ENCODE measurements at regions of chr16 and their contacts with region 1.

Region 1: GRCh38 chr16:86519649-86520316 is 9.5 kb downstream of the FOXF1 start:
- DNase-seq: peak; percentile 65
- H3K4me3 ChIP-seq: no peak overlapping the region
- H3K27ac ChIP-seq: no peak overlapping the region
- H3K4me1 ChIP-seq: peaks cover 5% of the 10 kb centered on the region
- H3K27me3 ChIP-seq: peaks cover 24 to 28% of the 10 kb centered on the region in 2 experiments
- CTCF ChIP-seq: peak; percentile 86 to 89
- POLR2A ChIP-seq: no peak

Region 2: DNA sequence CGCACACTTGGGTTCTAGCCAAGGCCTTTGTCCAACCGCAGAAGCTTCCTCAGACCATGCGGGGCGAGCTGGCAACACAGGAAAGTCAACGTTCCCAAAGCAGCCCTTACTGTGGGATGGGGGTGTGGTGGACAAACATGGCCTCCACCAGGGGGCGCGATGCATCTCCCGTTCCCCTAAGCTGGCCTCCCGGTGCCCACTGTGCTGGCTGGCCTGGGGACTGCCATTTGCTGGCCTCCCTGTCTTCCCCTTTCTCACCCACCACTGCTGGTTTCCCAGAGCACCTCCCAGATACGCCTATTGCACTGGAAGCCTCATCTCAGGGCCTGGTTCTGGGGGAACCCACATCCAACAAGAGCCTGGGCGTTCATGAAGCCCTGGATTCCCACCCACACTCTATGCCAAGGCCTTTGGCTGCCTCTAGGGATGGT is 475.5 kb before region 1 on chr16:
- CTCF ChIA-PET with region 1: interaction called, 109 read pairs
- POLR2A ChIA-PET with region 1: no interaction called
- dilution Hi-C with region 1: no loop called
- intact Hi-C with region 1: loop called (anchors 1 kb)
- DNase-seq: peak; percentile 36
- H3K4me3 ChIP-seq: no peak overlapping the region
- H3K27ac ChIP-seq: no peak overlapping the region
- H3K4me1 ChIP-seq: no peaks in the 10 kb centered on the region
- H3K27me3 ChIP-seq: peaks cover 5 to 20% of the 10 kb centered on the region in 2 experiments
- CTCF ChIP-seq: peak; percentile 69 to 91
- POLR2A ChIP-seq: no peak

Region 3: DNA sequence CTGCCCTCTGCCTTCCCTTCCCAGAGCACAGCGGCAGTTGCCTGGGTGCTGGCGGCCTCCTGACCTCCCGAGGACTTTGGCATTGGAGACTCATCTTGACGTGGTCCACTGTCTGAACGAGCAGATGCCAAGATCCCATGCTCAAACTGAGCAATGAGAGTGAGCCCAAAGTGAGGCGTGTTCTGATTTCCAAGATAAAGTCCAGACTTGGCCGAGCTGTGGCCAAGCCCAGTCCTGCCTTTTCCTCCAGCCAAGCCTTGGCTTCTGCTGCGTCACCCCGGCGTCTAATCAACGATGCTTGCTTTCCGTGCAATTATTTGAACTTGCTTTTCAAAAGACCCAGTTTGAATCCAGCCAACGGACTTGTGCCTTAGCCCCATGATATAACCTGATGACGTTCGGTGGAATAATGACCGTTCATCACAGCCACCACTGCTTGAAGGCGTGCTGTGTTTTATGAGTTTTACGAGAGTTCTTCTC is 441.6 kb before region 1 on chr16:
- CTCF ChIA-PET with region 1: interaction called, 238 read pairs
- POLR2A ChIA-PET with region 1: no interaction called
- dilution Hi-C with region 1: loop called (anchors 10 kb)
- intact Hi-C with region 1: loop called (anchors 1 kb)
- DNase-seq: no peak
- H3K4me3 ChIP-seq: no peak overlapping the region
- H3K27ac ChIP-seq: no peak overlapping the region
- H3K4me1 ChIP-seq: peaks cover 9% of the 10 kb centered on the region
- H3K27me3 ChIP-seq: no peaks in the 10 kb centered on the region
- CTCF ChIP-seq: no peak
- POLR2A ChIP-seq: no peak

Region 4: GRCh38 chr16:86252596-86252995 is 267.2 kb before region 1 on chr16:
- CTCF ChIA-PET with region 1: interaction called, 471 read pairs
- POLR2A ChIA-PET with region 1: interaction called, 5 read pairs
- dilution Hi-C with region 1: no loop called
- intact Hi-C with region 1: loop called (anchors 1 kb)
- DNase-seq: peak; percentile 45
- H3K4me3 ChIP-seq: no peak overlapping the region
- H3K27ac ChIP-seq: no peak overlapping the region
- H3K4me1 ChIP-seq: no peaks in the 10 kb centered on the region
- H3K27me3 ChIP-seq: peaks cover 5 to 17% of the 10 kb centered on the region in 2 experiments
- CTCF ChIP-seq: peak; percentile 58 to 77
- POLR2A ChIP-seq: no peak

Region 5: DNA sequence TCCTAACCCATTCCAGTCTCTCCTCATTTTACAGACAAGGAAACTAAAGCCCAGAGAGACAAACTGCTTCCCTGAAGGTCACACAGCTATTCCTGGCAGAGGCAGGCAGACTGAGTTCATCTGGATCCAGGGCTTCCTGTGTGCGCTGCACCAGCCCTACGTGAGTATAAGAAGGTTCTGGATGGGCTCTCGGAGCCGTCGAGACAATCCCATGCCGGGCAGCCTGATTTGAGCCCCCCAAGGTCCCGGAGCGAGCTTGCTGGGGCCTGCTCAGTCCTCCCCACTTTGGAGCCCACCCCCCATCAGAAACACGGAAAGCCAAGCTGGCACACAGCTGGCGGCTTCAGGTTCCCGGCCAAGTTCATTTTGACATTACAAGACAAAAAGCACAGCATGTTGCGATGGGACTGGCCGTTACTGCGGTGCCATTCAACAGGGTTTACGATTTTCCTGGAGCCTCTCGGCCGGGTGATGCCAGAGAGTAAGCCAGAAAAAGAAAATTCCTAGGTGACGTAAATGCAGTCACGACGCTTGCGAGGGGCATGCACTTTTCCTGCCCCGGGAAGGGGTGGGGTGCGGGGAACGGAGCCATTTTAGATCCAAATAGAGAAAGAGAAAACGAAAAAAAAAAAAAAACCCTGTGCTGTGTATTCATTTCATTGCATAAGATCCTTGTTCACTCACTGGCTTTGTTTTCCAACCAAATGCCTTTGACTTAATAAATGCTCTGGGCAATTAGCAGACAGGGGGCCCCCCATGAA is 176.6 kb before region 1 on chr16:
- CTCF ChIA-PET with region 1: interaction called, 58 read pairs
- POLR2A ChIA-PET with region 1: no interaction called
- dilution Hi-C with region 1: no loop called
- intact Hi-C with region 1: loop called (anchors 1 kb)
- DNase-seq: peak; percentile 83
- H3K4me3 ChIP-seq: no peak overlapping the region
- H3K27ac ChIP-seq: peak overlapping the region; percentile 88
- H3K4me1 ChIP-seq: peaks cover 43% of the 10 kb centered on the region
- H3K27me3 ChIP-seq: no peaks in the 10 kb centered on the region
- CTCF ChIP-seq: no peak
- POLR2A ChIP-seq: no peak

Region 6: DNA sequence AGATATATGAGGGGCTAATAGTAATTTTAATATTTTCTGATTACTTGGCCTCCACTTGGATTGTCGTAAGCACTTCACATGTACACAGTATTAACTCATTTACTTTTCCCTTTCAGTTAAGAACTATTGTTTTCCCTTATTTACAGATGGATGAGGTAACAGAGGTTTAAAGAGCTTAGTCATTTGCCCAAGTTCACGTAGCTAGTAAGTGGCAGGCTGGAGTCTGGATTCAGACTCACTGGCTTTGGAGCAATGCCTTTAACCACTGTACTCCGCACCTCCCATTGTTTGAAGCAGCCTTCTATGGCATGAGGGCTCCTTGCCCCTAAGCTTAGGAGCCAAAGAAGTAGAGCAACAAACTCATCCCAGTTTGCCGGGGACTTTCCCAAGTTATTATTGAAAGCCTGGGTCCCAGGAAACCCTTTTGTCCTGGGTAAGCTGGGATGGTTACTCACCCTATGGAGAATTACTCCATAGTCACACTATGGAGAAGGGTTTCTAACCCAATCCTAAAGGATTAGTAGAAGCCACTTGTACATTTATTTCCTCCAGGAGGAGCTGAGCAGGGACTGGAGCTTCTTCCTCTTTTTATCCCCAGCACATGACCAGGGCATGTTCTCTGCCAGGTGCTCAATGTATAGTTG is 70.8 kb after region 1 on chr16:
- CTCF ChIA-PET with region 1: no interaction called
- POLR2A ChIA-PET with region 1: no interaction called
- dilution Hi-C with region 1: no loop called
- intact Hi-C with region 1: no loop called
- DNase-seq: peak; percentile 63
- H3K4me3 ChIP-seq: no peak overlapping the region
- H3K27ac ChIP-seq: peak overlapping the region; percentile 54
- H3K4me1 ChIP-seq: peaks cover 24% of the 10 kb centered on the region
- H3K27me3 ChIP-seq: no peaks in the 10 kb centered on the region
- CTCF ChIP-seq: no peak
- POLR2A ChIP-seq: no peak

Measured in endothelial cell of umbilical vein (primary cell).